Vagina (tissue), 2 donors: ENCODE measurements at regions of chr4 and their contacts with region 1.

Region 1: DNA sequence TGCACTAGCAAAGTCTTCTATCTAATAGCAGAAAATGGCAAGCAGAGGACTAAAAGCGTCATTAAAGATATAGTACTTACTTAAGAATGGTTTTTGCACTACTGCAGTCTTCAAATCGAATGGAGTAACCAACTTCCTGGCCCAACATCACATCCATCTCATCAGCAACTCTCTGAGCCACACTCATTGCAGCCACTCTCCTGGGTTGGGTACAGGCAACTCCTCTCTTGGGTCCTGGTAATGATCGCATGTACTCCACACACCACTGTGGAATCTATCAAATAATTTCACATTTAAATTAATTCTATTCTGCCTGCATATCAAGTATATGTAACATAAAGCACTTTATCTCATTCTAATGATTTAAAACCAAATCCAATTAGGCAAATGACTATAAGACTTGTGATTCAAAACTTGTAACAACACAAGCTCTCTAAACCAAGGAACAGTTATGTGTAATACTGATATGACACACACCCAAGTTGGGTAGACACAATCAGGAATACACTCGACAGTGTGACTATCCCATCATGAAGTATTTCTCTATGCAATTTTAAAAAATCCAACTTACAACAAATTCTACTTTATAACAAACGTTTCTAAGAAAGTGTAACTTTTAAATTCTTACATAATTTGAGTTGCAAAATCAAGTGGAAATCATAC is 13.6 kb downstream of the DHX15 start:
- DNase-seq: no peak
- H3K4me3 ChIP-seq: no peak overlapping the region
- H3K27ac ChIP-seq: no peak overlapping the region
- H3K4me1 ChIP-seq: peaks cover 65% of the 10 kb centered on the region
- H3K27me3 ChIP-seq: no peaks in the 10 kb centered on the region
- CTCF ChIP-seq: no peak
- POLR2A ChIP-seq: no peak

Region 2: GRCh38 chr4:24472514-24473308 is 98.0 kb before region 1 on chr4:
- intact Hi-C with region 1: no loop called
- DNase-seq: no peak
- H3K4me3 ChIP-seq: peak overlapping the region; percentile 48 to 67
- H3K27ac ChIP-seq: peak overlapping the region; percentile 78
- H3K4me1 ChIP-seq: peaks cover 19% of the 10 kb centered on the region
- H3K27me3 ChIP-seq: no peaks in the 10 kb centered on the region
- CTCF ChIP-seq: peak in 1 of 3 experiments; percentile 55
- POLR2A ChIP-seq: peak in 1 of 2 donors; percentile 13

Region 3: GRCh38 chr4:24551492-24552289 is 19.0 kb before region 1 on chr4:
- intact Hi-C with region 1: loop called (anchors 2 kb)
- DNase-seq: no peak
- H3K4me3 ChIP-seq: no peak overlapping the region
- H3K27ac ChIP-seq: no peak overlapping the region
- H3K4me1 ChIP-seq: peaks cover 23% of the 10 kb centered on the region
- H3K27me3 ChIP-seq: no peaks in the 10 kb centered on the region
- CTCF ChIP-seq: no peak
- POLR2A ChIP-seq: no peak

Region 4: DNA sequence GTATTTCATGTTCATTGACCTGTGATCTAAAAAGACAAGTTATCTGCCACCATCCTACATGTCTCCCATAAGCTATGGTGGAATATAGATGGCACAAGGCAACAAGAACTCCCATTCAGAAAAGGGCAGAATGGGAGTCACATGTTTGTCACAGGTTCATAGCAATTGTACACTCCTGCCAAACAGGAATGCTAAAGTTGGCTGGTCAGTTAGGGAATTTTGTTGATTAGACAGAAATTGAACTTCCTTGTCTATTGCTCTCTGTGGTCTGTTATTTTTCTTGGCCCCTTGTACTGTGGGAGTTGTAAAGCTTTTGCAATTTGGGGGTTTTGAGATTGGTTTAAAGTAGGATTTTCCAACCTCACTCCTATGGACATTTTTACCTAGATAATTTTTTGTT is 122.9 kb after region 1 on chr4:
- intact Hi-C with region 1: no loop called
- DNase-seq: no peak
- H3K4me3 ChIP-seq: no peak overlapping the region
- H3K27ac ChIP-seq: no peak overlapping the region
- H3K4me1 ChIP-seq: no peaks in the 10 kb centered on the region
- H3K27me3 ChIP-seq: no peaks in the 10 kb centered on the region
- CTCF ChIP-seq: no peak
- POLR2A ChIP-seq: no peak